Activated CD4-positive, alpha-beta T cell treated with anti-CD3 and anti-CD28 coated beads, Interleukin-2, amount 10 ng/mL, durations not matched to agents 24 days and 14 days (primary cell): ENCODE measurements at regions of chr22 and their contacts with region 1.

Region 1: GRCh38 chr22:38941488-38941987 is 15.9 kb upstream of the APOBEC3A start:
- DNase-seq: peak; percentile 82
- H3K4me3 Mint-ChIP-seq: peak overlapping the region; percentile 75
- H3K27ac Mint-ChIP-seq: peak overlapping the region; percentile 92
- H3K4me1 Mint-ChIP-seq: peaks cover 47% of the 10 kb centered on the region
- H3K27me3 Mint-ChIP-seq: peaks cover 25% of the 10 kb centered on the region

Region 2: GRCh38 chr22:38953577-38954413 is 12.3 kb after region 1 on chr22:
- intact Hi-C with region 1: loop called (anchors 1 kb)
- DNase-seq: peak; percentile 94
- H3K4me3 Mint-ChIP-seq: peak overlapping the region; percentile 73
- H3K27ac Mint-ChIP-seq: peak overlapping the region; percentile 98
- H3K4me1 Mint-ChIP-seq: peaks cover 49% of the 10 kb centered on the region
- H3K27me3 Mint-ChIP-seq: no peaks in the 10 kb centered on the region

Region 3: GRCh38 chr22:38963872-38964271 is 22.3 kb after region 1 on chr22:
- intact Hi-C with region 1: no loop called
- DNase-seq: no peak
- H3K4me3 Mint-ChIP-seq: no peak overlapping the region
- H3K27ac Mint-ChIP-seq: no peak overlapping the region
- H3K4me1 Mint-ChIP-seq: peaks cover 23% of the 10 kb centered on the region
- H3K27me3 Mint-ChIP-seq: peaks cover under 1% of the 10 kb centered on the region

Region 4: GRCh38 chr22:38981992-38982927 is 40.7 kb after region 1 on chr22 and contains the start of gene APOBEC3B:
- intact Hi-C with region 1: loop called (anchors 1 kb)
- DNase-seq: peak; percentile 94
- H3K4me3 Mint-ChIP-seq: peak within 1 kb of the TSS; percentile 77
- H3K27ac Mint-ChIP-seq: peak within 1 kb of the TSS; percentile 90
- H3K4me1 Mint-ChIP-seq: peaks cover 50% of the 10 kb centered on the region
- H3K27me3 Mint-ChIP-seq: peaks cover 2% of the 10 kb centered on the region
- total RNA-seq, gene APOBEC3B: 25.4 and 26.1 TPM in 2 replicates

Region 5: DNA sequence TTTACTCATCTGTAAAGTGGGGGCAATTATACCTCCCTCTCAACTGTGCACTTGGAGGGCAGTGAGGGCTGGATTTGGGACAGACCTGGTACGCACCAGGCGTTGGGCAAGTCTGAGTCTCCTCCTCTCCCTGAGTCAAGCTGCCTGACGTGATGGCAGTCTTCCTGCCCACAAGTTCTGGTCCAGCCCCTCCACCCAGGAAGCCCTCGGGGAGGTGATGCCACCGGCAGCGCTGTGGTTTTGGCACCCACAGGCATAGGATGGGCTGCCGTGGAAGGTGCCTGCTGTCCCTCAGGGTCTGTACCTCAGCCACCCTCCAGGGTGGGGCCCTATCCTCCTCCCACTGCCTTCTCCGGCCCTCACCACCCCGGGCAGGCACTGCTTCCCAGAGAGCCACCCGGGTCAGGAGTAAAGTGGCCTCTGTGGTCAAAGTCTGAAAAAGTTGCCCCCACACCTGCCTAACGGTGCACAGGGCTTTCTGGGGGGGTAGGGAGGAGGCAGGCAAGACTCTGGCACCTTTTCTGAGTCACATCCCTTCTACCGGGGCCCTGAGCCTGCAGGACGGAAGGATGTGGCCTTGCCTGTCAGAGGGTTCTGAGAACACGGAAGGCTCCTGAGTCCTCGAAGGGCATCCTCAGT is 149.0 kb after region 1 on chr22:
- intact Hi-C with region 1: loop called (anchors 2 kb)
- DNase-seq: peak; percentile 94
- H3K4me3 Mint-ChIP-seq: peak overlapping the region; percentile 66
- H3K27ac Mint-ChIP-seq: peak overlapping the region; percentile 96
- H3K4me1 Mint-ChIP-seq: peaks cover 78% of the 10 kb centered on the region
- H3K27me3 Mint-ChIP-seq: no peaks in the 10 kb centered on the region

Region 6: GRCh38 chr22:39097098-39098020 is 155.8 kb after region 1 on chr22 and contains the start of gene APOBEC3H:
- intact Hi-C with region 1: loop called (anchors 1 kb)
- DNase-seq: peak; percentile 84
- H3K4me3 Mint-ChIP-seq: peak within 1 kb of the TSS; percentile 83
- H3K27ac Mint-ChIP-seq: peak within 1 kb of the TSS; percentile 91
- H3K4me1 Mint-ChIP-seq: peaks cover 71% of the 10 kb centered on the region
- H3K27me3 Mint-ChIP-seq: no peaks in the 10 kb centered on the region
- total RNA-seq, gene APOBEC3H: 5.8 and 7.6 TPM in 2 replicates

Region 7: DNA sequence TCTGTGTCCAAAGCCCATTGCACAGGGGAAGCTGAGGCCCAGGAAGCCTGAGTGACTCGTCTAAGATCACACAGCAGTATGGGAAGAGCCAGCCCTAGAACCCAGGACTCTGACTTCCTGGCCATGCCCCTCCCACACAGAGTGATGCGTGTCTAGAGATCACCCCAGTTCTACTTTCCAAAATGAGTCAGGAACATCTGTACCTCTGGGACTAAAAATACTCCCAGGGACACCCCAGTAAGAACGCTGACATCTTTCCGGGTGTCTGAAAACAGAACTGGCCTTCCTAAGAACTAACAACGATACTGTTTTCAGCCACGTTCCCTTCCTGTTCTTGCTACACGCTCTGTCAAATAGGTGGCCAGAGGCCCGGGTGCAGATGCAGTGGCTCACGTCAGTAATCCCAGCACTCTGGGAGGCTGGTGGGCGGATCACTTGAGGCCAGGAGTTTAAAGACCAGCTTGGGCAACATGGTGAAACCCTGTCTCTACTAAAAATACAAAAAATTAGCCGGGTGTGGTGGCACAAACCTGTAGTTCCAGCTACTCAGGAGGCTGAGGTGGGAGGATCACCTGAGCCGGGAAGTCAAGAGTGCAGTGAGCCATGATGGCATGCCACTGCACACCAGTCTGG is 325.0 kb after region 1 on chr22:
- intact Hi-C with region 1: loop called (anchors 1 kb)
- DNase-seq: peak; percentile 81
- H3K4me3 Mint-ChIP-seq: peak overlapping the region; percentile 35
- H3K27ac Mint-ChIP-seq: peak overlapping the region; percentile 88
- H3K4me1 Mint-ChIP-seq: peaks cover 21% of the 10 kb centered on the region
- H3K27me3 Mint-ChIP-seq: no peaks in the 10 kb centered on the region